Activated T-helper 1 cell treated with anti-CD3 and anti-CD28 coated beads, Interleukin-12 subunit alpha, Interleukin-12 subunit beta, Interleukin-2, Interleukin-4 antibody, amounts not matched to agents 30 ng/mL and 10 ng/mL and 1 ng/mL, durations not matched to agents 14 hours and 24 hours and 36 hours (primary cell): ENCODE measurements at regions of chr5 and their contacts with region 1.

Region 1: GRCh38 chr5:159106569-159107282 is 7.0 kb upstream of the EBF1 start:
- DNase-seq: peak; percentile 40
- H3K4me3 Mint-ChIP-seq: peak overlapping the region; percentile 77
- H3K27ac Mint-ChIP-seq: peak overlapping the region; percentile 24
- H3K4me1 Mint-ChIP-seq: peaks cover 19% of the 10 kb centered on the region
- H3K27me3 Mint-ChIP-seq: peaks cover 71% of the 10 kb centered on the region

Region 2: GRCh38 chr5:157761690-157762621 is 1344.8 kb before region 1 on chr5:
- intact Hi-C with region 1: loop called (anchors 5 kb)
- DNase-seq: peak; percentile 11
- H3K4me3 Mint-ChIP-seq: no peak overlapping the region
- H3K27ac Mint-ChIP-seq: no peak overlapping the region
- H3K4me1 Mint-ChIP-seq: peaks cover 8% of the 10 kb centered on the region
- H3K27me3 Mint-ChIP-seq: peaks cover 2% of the 10 kb centered on the region

Region 3: DNA sequence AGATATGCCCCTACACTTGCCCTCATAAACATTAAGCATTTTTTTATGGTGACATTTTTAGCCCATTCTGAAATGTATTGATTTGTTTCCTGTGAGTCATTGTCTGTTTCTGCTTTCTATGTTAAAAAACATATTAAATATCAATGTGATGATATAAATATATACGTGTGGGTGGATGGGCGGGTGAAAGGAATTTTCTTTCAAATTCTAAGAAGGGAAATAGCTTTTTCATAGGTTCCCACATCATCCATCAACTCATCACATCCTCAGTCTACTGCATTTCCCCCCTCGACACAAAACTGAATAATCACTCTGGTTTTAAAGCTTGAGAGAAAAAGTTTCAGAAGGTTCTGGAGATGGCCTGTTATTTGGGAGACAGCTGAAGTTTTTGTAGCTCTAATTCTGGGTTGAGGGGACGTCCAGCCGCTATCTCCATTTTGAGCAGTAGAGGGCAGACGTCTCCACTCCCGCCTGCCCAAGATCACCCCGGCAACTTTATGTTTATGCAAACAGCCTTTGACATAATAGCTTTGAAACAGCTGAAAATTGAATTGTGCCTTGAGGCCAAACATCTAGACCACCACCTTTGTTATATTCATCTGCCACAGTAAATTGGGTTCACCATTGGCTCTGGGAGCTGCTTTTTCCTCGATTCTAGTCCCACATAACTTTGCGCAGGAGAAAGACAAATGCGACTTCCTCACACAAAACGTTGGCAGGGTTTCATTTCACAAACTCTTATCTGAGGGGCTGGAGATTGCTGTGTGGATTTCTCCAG is 1031.5 kb before region 1 on chr5:
- intact Hi-C with region 1: loop called (anchors 1 kb)
- DNase-seq: peak; percentile 12
- H3K4me3 Mint-ChIP-seq: no peak overlapping the region
- H3K27ac Mint-ChIP-seq: no peak overlapping the region
- H3K4me1 Mint-ChIP-seq: no peaks in the 10 kb centered on the region
- H3K27me3 Mint-ChIP-seq: peaks cover 16% of the 10 kb centered on the region

Region 4: GRCh38 chr5:158543539-158544387 is 563.0 kb before region 1 on chr5:
- intact Hi-C with region 1: loop called (anchors 10 kb)
- DNase-seq: no peak
- H3K4me3 Mint-ChIP-seq: no peak overlapping the region
- H3K27ac Mint-ChIP-seq: no peak overlapping the region
- H3K4me1 Mint-ChIP-seq: peaks cover 4% of the 10 kb centered on the region
- H3K27me3 Mint-ChIP-seq: peaks cover 2% of the 10 kb centered on the region

Region 5: GRCh38 chr5:158695595-158696330 is 411.0 kb before region 1 on chr5:
- intact Hi-C with region 1: loop called (anchors 1 kb)
- DNase-seq: peak; percentile 46
- H3K4me3 Mint-ChIP-seq: no peak overlapping the region
- H3K27ac Mint-ChIP-seq: no peak overlapping the region
- H3K4me1 Mint-ChIP-seq: peaks cover 5% of the 10 kb centered on the region
- H3K27me3 Mint-ChIP-seq: peaks cover 8% of the 10 kb centered on the region

Region 6: DNA sequence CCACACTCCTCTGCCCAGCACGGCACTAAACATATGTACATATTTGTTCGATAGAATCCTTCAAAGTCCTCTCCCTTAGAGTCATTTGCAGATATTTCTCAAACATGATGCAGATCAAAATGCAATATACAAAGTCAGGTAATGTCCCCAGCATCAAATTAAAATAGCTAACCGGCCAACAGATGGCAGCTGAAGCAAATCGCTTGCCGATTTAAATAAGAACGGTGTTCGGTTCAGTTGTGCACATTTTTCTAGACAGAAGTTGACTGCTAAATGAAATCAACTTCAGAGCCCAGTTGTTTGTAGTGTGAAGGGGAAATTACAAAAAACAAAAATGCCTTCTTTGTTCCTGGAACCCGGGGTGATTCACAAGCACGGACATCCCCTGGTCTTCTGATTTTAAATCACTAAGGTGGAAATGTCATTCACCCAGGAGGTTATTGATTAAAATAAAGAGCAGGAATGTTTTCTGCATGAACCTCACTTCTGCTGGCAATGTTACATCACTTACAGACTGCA is 226.2 kb before region 1 on chr5:
- intact Hi-C with region 1: loop called (anchors 5 kb)
- DNase-seq: no peak
- H3K4me3 Mint-ChIP-seq: no peak overlapping the region
- H3K27ac Mint-ChIP-seq: peak overlapping the region; percentile 31
- H3K4me1 Mint-ChIP-seq: peaks cover 36% of the 10 kb centered on the region
- H3K27me3 Mint-ChIP-seq: no peaks in the 10 kb centered on the region

Region 7: DNA sequence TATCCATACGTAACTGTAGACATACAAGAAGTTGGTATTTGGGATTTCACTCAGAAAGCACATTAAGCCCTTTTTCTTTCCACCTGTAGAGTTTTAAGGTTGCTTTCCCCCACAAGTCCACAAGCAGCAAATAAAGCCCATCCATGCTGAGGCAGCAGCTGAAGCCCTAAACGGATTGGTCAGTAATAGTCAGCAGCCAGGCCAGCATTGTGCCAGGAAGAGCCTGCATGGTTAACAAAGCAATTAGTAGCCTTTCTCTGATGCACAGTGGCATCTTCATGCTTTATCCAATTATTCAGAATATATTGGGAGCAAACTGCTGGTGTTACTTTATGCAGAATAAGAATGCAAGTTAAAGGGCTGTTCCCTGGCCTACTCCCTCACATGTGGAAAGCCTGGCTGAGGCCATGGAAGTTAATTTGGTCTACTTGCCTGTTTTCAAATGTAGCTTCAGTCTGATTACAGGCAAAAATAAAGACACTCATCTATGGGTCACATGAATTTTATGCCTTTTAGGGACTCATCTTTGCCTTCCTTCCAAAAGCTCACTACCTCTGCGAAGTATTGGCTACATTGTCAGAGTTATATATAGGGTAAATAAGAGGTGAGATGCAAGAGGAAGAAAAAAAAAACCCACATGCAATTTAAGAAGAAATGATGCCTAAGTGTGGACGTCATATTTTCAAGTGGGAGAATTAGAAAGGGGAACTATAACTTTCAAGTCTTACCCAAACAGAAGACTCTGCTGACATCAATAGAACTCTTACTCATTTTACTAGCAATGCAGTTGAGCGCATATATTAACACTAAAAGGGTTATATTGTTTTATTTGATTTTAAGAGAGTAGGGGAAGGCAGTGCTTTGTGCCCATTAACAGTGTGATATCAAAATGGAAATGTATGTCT is 22.9 kb before region 1 on chr5:
- intact Hi-C with region 1: no loop called
- DNase-seq: no peak
- H3K4me3 Mint-ChIP-seq: no peak overlapping the region
- H3K27ac Mint-ChIP-seq: no peak overlapping the region
- H3K4me1 Mint-ChIP-seq: no peaks in the 10 kb centered on the region
- H3K27me3 Mint-ChIP-seq: peaks cover 20% of the 10 kb centered on the region

Region 8: GRCh38 chr5:159133041-159133741 is 26.5 kb after region 1 on chr5:
- intact Hi-C with region 1: loop called (anchors 2 kb)
- DNase-seq: no peak
- H3K4me3 Mint-ChIP-seq: no peak overlapping the region
- H3K27ac Mint-ChIP-seq: no peak overlapping the region
- H3K4me1 Mint-ChIP-seq: no peaks in the 10 kb centered on the region
- H3K27me3 Mint-ChIP-seq: peaks cover 23% of the 10 kb centered on the region